ENCODE measurements at regions of chr1 and their contacts with region 1.

Region 1: GRCh38 chr1:87061742-87062156 is 147.3 kb downstream of the HS2ST1 start:
- DNase-seq: peak; percentile 66
- ATAC-seq: peak; percentile 58
- H3K4me3 ChIP-seq: no peak overlapping the region
- H3K27ac ChIP-seq: peak overlapping the region; percentile 5
- H3K4me1 ChIP-seq: peaks cover 30% of the 10 kb centered on the region
- H3K27me3 ChIP-seq: no peaks in the 10 kb centered on the region
- CTCF ChIP-seq: no peak
- EP300 ChIP-seq: 0 out of 4 replicates have a peak, but pooled peaks of 1 of the 2 experiments have one; percentile 40
- POLR2A ChIP-seq: no peak
- RAD21 ChIP-seq: no peak

Region 2: DNA sequence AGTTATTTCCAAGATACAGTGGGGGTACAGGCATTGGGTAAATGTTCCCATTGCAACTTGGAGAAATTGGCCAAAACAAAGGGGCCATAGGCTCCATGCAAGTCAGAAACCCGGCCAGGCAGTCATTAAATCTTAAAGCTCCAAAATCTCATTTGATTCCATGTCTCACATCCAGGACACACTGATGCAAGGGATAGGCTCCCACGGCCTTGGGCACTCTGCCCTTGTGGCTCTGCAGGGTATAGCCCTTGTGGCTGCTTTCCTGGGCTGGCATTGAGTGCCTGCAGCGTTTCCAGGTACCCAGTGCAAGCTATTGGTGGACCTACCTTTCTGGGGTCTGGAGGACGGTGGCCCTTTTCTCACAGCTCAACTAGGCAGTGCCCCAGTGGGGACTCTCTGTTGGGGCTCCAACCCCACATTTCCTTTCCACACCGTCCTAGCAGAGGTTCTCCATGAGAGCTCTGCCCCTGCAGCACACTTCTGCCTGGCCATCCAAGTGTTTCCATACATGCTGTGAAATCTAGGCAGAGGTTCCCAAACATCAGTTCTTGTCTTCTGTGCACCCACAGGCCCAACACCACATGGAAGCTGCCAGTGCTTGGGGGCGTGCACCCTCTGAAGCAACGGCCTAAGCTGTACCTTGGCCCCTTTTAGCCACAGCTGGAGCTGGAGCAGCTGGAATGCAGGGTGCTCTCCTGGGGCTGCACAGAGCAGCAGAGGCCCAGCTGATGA is 80.1 kb before region 1 on chr1:
- CTCF ChIA-PET with region 1: no interaction called
- POLR2A ChIA-PET with region 1: no interaction called
- RAD21 ChIA-PET with region 1: interaction called, 4 read pairs
- SMC1A ChIA-PET with region 1: interaction called, 5 read pairs
- in situ Hi-C with region 1: no loop called
- intact Hi-C with region 1: loop called (anchors 5 kb)
- DNase-seq: no peak
- ATAC-seq: no peak
- H3K4me3 ChIP-seq: no peak overlapping the region
- H3K27ac ChIP-seq: no peak overlapping the region
- H3K4me1 ChIP-seq: no peaks in the 10 kb centered on the region
- H3K27me3 ChIP-seq: no peaks in the 10 kb centered on the region
- CTCF ChIP-seq: no peak
- EP300 ChIP-seq: no peak
- POLR2A ChIP-seq: no peak
- RAD21 ChIP-seq: no peak

Region 3: GRCh38 chr1:87077959-87078639 is 16.4 kb after region 1 on chr1:
- CTCF ChIA-PET with region 1: interaction called, 36 read pairs
- POLR2A ChIA-PET with region 1: interaction called, 7 read pairs
- RAD21 ChIA-PET with region 1: interaction called, 43 read pairs
- SMC1A ChIA-PET with region 1: interaction called, 48 read pairs
- in situ Hi-C with region 1: no loop called
- intact Hi-C with region 1: no loop called
- DNase-seq: no peak
- ATAC-seq: peak; percentile 47
- H3K4me3 ChIP-seq: no peak overlapping the region
- H3K27ac ChIP-seq: peak overlapping the region; percentile 46; the same call in 1 of the 2 replicates
- H3K4me1 ChIP-seq: peaks cover 13% of the 10 kb centered on the region
- H3K27me3 ChIP-seq: no peaks in the 10 kb centered on the region
- CTCF ChIP-seq: no peak
- EP300 ChIP-seq: no peak
- POLR2A ChIP-seq: no peak
- RAD21 ChIP-seq: no peak

Region 4: DNA sequence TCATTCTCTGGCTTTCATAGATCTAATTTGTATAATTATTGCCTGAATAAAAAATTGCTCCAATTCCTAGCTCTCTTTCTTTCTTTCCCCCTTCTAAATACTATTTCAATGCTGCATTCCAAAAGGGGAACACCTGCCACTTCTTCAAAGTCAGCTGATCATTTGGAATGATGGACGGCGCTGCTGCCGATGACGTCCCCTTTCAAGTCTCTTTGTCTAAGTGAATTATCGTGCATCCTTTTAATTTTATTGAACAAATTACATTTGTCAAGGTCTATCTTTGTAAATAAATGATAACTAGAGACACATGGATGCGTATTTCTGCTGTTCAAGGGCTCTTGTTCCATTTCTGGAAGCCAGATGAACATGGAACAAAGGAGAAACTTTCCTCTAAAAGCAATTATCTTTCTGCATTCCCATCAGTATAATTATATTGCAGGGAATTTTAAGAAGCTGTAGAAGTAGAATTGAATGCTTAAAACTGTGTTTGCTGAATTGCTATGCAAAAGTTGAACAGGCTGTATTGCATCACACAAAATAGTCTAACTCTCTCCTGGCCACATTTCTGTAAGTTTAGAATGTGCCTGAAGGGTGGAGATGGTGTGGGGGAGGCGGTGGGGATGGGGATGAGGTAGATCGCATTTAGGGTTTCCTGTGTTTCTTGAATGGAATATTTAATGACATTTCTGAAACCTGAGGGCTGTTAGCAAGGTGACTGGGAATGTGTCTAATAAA is 75.0 kb after region 1 on chr1:
- CTCF ChIA-PET with region 1: no interaction called
- POLR2A ChIA-PET with region 1: no interaction called
- RAD21 ChIA-PET with region 1: no interaction called
- SMC1A ChIA-PET with region 1: no interaction called
- in situ Hi-C with region 1: no loop called
- intact Hi-C with region 1: no loop called
- DNase-seq: no peak
- ATAC-seq: no peak
- H3K4me3 ChIP-seq: no peak overlapping the region
- H3K27ac ChIP-seq: no peak overlapping the region
- H3K4me1 ChIP-seq: no peaks in the 10 kb centered on the region
- H3K27me3 ChIP-seq: no peaks in the 10 kb centered on the region; a peak in 1 of 4 replicates
- CTCF ChIP-seq: no peak
- EP300 ChIP-seq: no peak
- POLR2A ChIP-seq: no peak
- RAD21 ChIP-seq: no peak